Naive thymus-derived CD4-positive, alpha-beta T cell (primary cell): ENCODE measurements at regions of chr4 and their contacts with region 1.

Region 1: DNA sequence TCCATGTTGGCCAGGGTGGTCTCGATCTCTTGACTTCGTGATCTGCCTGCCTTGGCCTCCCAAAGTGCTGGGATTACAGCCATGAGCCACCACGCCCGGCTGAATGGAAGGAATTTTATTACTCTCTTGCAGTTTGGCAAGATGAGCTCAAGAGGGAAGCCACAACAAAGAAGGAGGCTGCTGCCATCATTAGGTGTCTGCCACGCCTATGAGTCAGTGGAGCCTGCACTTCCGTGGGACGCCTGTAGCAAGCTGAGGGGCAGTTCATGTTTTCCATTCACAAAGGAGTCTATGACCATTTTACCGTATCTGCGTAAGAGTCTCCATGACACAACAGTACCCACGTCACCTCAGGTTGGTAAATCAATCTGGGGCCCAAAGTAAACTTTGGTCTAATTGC is 51.2 kb upstream of the CHRNA9 start:
- DNase-seq: peak in 8 of 9 donors; percentile 60 to 93 (median 81)
- ATAC-seq: peak; percentile 98
- H3K4me3 ChIP-seq: peak overlapping the region; percentile 18
- H3K4me3 Mint-ChIP-seq: peak overlapping the region; percentile 57 to 81 (median 72)
- H3K27ac ChIP-seq: peak overlapping the region; percentile 70
- H3K27ac Mint-ChIP-seq: peak overlapping the region in 8 of 9 donors; percentile 89 to 99 (median 96)
- H3K4me1 ChIP-seq: peaks cover 38 to 40% of the 10 kb centered on the region in 2 donors
- H3K4me1 Mint-ChIP-seq: peaks cover 30 to 85% (median 80%) of the 10 kb centered on the region in 7 donors
- H3K27me3 ChIP-seq: no peaks in the 10 kb centered on the region
- H3K27me3 Mint-ChIP-seq: no peaks in the 10 kb centered on the region

Region 2: DNA sequence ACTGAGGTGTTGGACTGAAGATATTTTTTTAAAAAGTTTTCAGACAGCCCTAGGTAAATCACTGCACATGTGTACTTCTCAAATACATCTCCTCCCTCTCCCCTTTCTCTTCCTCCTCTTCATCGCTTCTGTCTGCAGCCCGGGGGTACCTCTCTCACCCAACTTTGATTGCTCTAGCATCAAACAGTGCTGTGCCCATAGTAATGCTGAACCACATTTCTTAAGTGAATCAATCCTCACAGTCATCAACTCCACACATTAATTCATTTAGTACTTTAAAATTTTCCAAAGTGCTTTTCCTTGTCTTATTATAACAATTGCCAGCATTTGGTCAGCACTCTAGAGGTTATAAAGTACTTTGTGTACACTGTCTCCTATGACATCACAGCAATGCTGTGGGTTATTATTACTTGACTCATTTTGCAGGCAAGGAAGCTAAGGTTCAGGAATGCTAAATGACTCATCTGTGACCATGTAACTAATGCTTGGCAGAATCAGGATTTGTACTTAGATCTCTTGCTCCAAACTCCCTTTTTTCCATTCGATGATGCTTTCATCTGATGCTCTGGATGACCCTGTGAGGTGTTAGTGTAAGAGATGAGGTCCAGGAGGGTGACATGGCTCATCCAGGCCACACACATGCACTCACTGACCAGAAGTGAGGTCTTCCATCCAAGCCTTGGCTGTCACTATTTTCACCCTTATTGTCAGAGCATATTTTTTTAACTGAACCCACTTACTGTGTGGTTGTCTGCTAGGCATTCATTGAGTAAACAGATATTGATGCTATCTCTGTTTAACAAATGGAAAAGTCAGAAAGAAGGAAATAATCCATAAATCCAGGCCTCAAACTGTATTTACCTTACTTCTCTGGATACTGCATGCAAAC is 28.3 kb before region 1 on chr4:
- CTCF ChIA-PET with region 1: interaction called, 6 read pairs
- POLR2A ChIA-PET with region 1: interaction called, 5 read pairs
- intact Hi-C with region 1: loop called in 1 of 2 experiments (anchors 2 kb)
- DNase-seq: no peak
- ATAC-seq: no peak
- H3K4me3 ChIP-seq: no peak overlapping the region
- H3K4me3 Mint-ChIP-seq: peak overlapping the region; percentile 47 to 93 (median 64)
- H3K27ac ChIP-seq: peak overlapping the region; percentile 58
- H3K27ac Mint-ChIP-seq: peak overlapping the region; percentile 79 to 99 (median 92)
- H3K4me1 ChIP-seq: peaks cover 22 to 68% of the 10 kb centered on the region in 2 donors
- H3K4me1 Mint-ChIP-seq: peaks cover 46 to 83% (median 77%) of the 10 kb centered on the region in 7 donors
- H3K27me3 ChIP-seq: no peaks in the 10 kb centered on the region
- H3K27me3 Mint-ChIP-seq: no peaks in the 10 kb centered on the region

Region 3: DNA sequence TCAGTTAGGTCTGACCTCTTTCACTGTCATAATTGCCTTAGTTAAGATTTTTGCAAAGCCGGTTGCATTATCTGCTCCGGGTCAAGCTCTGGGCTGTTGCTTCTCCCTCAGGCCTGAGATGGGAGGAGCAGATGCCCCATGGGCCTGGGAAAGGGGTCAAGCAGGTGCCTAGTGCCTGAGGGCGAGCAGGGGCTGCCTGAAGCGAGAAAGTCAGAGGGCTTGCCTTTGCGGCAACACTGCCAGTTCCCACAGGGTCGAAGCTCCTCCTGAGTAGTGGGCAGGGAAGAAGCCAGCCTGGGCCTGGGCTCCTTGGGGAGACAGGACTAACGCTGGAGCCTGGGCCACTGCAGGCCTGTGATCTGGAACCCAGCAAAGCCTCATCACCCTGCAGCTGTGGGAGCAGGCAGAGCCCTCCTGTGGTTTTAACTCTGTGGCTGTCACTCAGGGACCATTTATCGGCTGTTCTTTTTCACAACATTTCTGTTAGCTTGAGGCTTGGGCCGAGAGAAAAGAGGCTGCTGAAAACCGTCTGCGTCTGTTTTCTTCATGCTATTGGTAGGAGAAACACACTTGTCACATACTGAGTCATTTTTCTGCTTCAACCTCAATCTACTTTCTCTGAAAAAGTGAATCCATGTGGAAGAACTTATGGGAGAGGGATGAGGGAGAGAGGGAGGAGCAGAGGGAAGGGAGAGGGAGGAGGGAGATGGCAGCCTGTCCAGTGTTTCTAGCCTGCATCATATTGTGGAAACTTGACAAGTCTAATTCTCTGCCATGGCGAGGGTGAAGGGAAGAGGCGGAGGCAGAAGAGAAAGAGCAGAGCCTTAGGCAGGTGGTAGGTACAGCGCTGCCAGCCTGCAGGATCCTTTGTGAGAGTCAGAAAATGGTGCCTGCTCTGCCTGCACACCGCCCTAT is 18.7 kb before region 1 on chr4:
- CTCF ChIA-PET with region 1: interaction called, 3 read pairs
- POLR2A ChIA-PET with region 1: interaction called, 9 read pairs
- intact Hi-C with region 1: loop called in 1 of 2 experiments (anchors 1 kb)
- DNase-seq: peak in 5 of 9 donors; percentile 43 to 58 (median 51)
- ATAC-seq: peak; percentile 87
- H3K4me3 ChIP-seq: peak overlapping the region; percentile 22
- H3K4me3 Mint-ChIP-seq: peak overlapping the region; percentile 72 to 89 (median 81)
- H3K27ac ChIP-seq: peak overlapping the region; percentile 77
- H3K27ac Mint-ChIP-seq: peak overlapping the region; percentile 80 to 99 (median 97)
- H3K4me1 ChIP-seq: peaks cover 31 to 53% of the 10 kb centered on the region in 2 donors
- H3K4me1 Mint-ChIP-seq: peaks cover 33 to 88% (median 78%) of the 10 kb centered on the region in 7 donors
- H3K27me3 ChIP-seq: no peaks in the 10 kb centered on the region
- H3K27me3 Mint-ChIP-seq: no peaks in the 10 kb centered on the region

Region 4: DNA sequence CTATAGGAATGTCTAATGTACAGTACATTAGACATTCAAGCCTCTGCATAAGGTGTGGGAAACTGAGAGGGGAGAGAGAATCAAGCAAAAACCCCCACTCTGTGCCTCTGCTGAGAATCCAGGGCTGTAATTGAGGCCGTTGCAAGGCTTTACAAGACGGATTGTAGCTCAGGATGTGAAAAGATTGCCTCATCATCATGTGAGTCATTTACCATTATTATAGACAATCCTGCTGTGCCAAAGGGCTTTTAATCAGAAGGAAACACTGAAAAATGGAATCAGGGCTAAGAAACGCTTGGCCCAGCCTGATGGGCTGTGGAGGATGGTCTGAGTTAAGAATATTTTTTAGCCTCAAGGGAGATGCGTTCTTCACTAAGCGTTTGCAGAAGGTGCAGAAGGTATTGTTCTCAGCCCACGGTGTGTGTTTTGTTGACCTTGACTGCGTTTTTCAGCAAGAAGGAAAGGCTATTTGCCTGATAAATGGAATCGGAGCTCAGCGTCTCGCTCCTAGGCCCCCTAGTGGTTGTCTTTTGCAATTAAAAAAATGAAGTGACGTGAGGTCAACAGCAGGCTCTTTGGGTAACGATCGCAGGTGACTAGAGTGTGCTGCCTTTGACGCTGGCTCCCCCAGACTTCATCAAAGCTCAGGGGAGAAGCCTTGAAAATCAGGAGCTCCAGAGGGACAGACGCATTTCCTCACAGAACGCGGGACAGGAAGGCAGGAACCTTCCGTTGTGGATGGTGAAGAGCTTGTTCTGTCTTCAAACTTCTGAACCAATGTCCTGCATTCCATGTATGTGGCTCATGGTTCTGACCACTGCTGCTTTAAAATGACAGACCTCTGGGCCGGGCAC is 33.0 kb after region 1 on chr4:
- CTCF ChIA-PET with region 1: interaction called, 8 read pairs
- POLR2A ChIA-PET with region 1: interaction called, 113 read pairs
- intact Hi-C with region 1: loop called in 1 of 2 experiments (anchors 1 kb)
- DNase-seq: peak; percentile 39 to 83 (median 76)
- ATAC-seq: peak; percentile 81
- H3K4me3 ChIP-seq: peak overlapping the region; percentile 75
- H3K4me3 Mint-ChIP-seq: peak overlapping the region; percentile 79 to 93 (median 86)
- H3K27ac ChIP-seq: peak overlapping the region; percentile 92
- H3K27ac Mint-ChIP-seq: peak overlapping the region; percentile 90 to 99 (median 99)
- H3K4me1 ChIP-seq: peaks cover 7 to 19% of the 10 kb centered on the region in 2 donors
- H3K4me1 Mint-ChIP-seq: peaks cover 23 to 71% (median 61%) of the 10 kb centered on the region in 7 donors
- H3K27me3 ChIP-seq: no peaks in the 10 kb centered on the region
- H3K27me3 Mint-ChIP-seq: no peaks in the 10 kb centered on the region

Region 5: GRCh38 chr4:40325189-40326019 is 41.4 kb after region 1 on chr4:
- CTCF ChIA-PET with region 1: interaction called, 13 read pairs
- POLR2A ChIA-PET with region 1: interaction called, 5 read pairs
- intact Hi-C with region 1: no loop called
- DNase-seq: peak in 7 of 9 donors; percentile 70 to 85 (median 82)
- ATAC-seq: peak; percentile 100
- H3K4me3 ChIP-seq: no peak overlapping the region
- H3K4me3 Mint-ChIP-seq: peak overlapping the region in 4 of 10 donors; percentile 0 to 48 (median 14)
- H3K27ac ChIP-seq: peak overlapping the region; percentile 45
- H3K27ac Mint-ChIP-seq: peak overlapping the region in 8 of 9 donors; percentile 25 to 87 (median 64)
- H3K4me1 ChIP-seq: peaks cover 0 to 8% of the 10 kb centered on the region in 2 donors
- H3K4me1 Mint-ChIP-seq: peaks cover 13 to 40% (median 35%) of the 10 kb centered on the region in 7 donors
- H3K27me3 ChIP-seq: no peaks in the 10 kb centered on the region
- H3K27me3 Mint-ChIP-seq: peaks cover 0 to 7% (median 4%) of the 10 kb centered on the region in 5 donors